GM12878 (cell line): ENCODE measurements at regions of chr7 and their contacts with region 1.

Region 1: GRCh38 chr7:100195222-100195621 is 17.5 kb downstream of the STAG3 start:
- DNase-seq: no peak
- ATAC-seq: no peak
- H3K4me3 ChIP-seq: no peak overlapping the region
- H3K27ac ChIP-seq: peak overlapping the region; percentile 40; the same call in 1 of the 2 replicates
- H3K4me1 ChIP-seq: peaks cover 49% of the 10 kb centered on the region
- H3K27me3 ChIP-seq: no peaks in the 10 kb centered on the region
- CTCF ChIP-seq: no peak
- EP300 ChIP-seq: no peak
- POLR2A ChIP-seq: no peak
- RAD21 ChIP-seq: no peak

Region 2: GRCh38 chr7:100208911-100209408 is 13.7 kb after region 1 on chr7:
- CTCF ChIA-PET with region 1: interaction called, 113 read pairs
- POLR2A ChIA-PET with region 1: interaction called, 86 read pairs
- RAD21 ChIA-PET with region 1: interaction called, 33 read pairs
- SMC1A ChIA-PET with region 1: interaction called, 140 read pairs
- in situ Hi-C with region 1: no loop called
- intact Hi-C with region 1: no loop called
- DNase-seq: peak; percentile 87
- ATAC-seq: peak; percentile 89
- H3K4me3 ChIP-seq: peak overlapping the region; percentile 56; the same call in 1 of the 2 replicates
- H3K27ac ChIP-seq: peak overlapping the region; percentile 57
- H3K4me1 ChIP-seq: peaks cover 51% of the 10 kb centered on the region
- H3K27me3 ChIP-seq: no peaks in the 10 kb centered on the region
- CTCF ChIP-seq: peak in 1 of 3 experiments; percentile 25; a peak in 1 of 6 replicates
- EP300 ChIP-seq: peak; percentile 27 to 74; a peak in 3 of 4 replicates
- POLR2A ChIP-seq: no peak
- RAD21 ChIP-seq: no peak

Region 3: DNA sequence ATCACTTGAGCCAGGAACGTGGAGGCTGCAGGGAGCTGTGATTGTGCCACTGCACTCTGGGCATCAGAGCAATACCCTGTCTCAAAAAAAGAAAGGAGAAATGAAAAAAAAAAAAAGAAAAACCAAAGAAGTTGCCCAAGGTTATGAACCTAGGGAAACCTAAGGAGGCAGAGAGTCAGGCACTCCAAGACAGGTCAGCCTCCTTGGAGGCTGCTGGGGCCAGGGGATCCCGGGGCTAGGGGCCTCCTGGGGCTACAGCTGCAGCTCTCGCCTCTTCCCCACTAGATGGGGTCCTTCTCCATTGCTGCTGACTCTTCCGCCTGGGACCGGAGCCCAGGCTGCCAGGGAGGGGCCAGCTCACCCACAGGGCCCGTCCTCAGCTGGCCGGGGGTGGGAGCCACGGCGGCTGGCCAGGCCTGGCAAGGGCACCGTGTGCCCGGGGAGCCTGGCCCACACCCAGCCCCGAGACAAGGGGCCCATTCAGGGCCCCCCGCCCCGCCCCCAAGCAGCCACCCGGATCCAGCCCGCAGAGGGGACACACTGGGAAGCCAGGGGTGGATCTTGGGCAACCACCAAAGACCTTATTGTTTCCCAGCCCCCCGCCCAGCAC is 270.6 kb after region 1 on chr7:
- CTCF ChIA-PET with region 1: no interaction called
- POLR2A ChIA-PET with region 1: no interaction called
- RAD21 ChIA-PET with region 1: no interaction called
- SMC1A ChIA-PET with region 1: no interaction called
- in situ Hi-C with region 1: no loop called
- intact Hi-C with region 1: no loop called
- DNase-seq: no peak
- ATAC-seq: peak; percentile 58
- H3K4me3 ChIP-seq: no peak overlapping the region
- H3K27ac ChIP-seq: no peak overlapping the region
- H3K4me1 ChIP-seq: no peaks in the 10 kb centered on the region
- H3K27me3 ChIP-seq: no peaks in the 10 kb centered on the region
- CTCF ChIP-seq: peak in 2 of 3 experiments; percentile 33 to 36; a peak in 2 of 6 replicates
- EP300 ChIP-seq: no peak
- POLR2A ChIP-seq: no peak; the same call in 1 of the 2 replicates
- RAD21 ChIP-seq: 0 out of 2 replicates have a peak, but pooled peaks have one; percentile 5